Activated T-helper 2 cell treated with anti-CD3 and anti-CD28 coated beads, Interferon-gamma antibody, Interleukin-2, Interleukin-4, amounts not matched to agents 10 μg/mL and 5 μg/mL and 100 μg/mL, durations not matched to agents 14 hours and 24 hours and 36 hours (primary cell): ENCODE measurements at regions of chr15 and their contacts with region 1.

Region 1: DNA sequence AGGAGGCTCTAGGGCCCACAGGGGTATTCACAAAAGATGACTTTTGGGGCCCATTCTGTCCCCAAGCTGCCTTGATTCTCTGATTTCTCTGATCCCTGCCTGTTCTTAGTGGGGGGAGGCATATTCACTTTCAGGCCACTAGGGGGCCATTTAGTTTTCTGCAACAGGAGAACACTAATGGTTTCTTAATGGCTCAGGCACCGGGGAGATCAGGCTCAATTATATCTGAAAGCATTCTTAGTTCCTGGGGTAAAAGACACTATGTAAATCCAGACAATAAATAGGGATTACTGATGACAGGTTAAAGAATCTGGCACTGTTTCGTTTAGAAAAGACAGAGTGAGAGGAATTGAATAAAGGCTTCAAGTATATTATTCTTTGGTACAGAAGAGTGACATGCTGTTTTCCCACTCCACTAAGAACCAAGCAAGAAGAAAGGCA is 2.5 kb upstream of the INAFM2 start:
- DNase-seq: peak; percentile 50
- H3K4me3 Mint-ChIP-seq: no peak overlapping the region
- H3K27ac Mint-ChIP-seq: no peak overlapping the region
- H3K4me1 Mint-ChIP-seq: peaks cover 17% of the 10 kb centered on the region
- H3K27me3 Mint-ChIP-seq: peaks cover 35% of the 10 kb centered on the region

Region 2: DNA sequence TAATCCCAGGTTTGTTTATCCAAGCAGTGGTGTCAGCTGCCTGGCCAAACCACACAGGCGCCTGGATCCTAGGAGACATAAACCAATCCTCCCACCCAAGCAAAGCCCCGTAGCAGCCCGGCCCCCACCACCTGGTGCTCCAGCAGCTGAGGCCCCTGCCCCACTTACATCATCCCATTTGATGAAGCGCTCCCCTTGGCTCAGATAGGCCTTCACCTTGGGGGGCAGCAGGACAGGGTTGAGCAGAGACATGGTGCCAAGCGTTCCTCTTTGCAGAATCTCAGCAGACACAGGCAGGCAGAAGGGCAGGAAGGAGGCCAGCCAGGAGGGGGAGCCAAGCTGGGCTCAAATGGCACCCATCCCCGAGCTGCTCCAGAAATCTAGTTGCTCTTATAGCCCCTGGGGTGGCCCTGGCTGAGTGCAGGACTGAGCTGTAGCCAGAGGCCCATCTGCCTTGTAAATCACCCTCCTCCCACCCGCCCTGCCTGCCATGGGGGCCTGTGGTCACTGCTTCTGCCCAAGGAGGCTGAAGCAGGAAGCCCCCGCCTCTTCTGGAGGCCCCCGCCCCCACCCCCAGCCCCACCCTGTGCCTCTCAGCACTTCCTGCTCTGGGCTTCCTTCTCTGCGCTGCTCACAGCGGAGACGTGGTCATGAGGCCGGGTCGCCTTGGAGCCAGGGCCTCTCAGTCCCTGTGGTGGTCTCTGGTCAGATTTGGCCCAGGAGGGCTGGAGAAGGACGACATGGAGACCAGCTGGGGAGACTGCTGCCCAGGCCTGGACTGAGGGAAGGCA is 13.3 kb before region 1 on chr15 and contains the start of gene PLCB2:
- intact Hi-C with region 1: loop called (anchors 1 kb)
- DNase-seq: peak; percentile 68
- H3K4me3 Mint-ChIP-seq: peak within 1 kb of the TSS; percentile 90
- H3K27ac Mint-ChIP-seq: peak within 1 kb of the TSS; percentile 97
- H3K4me1 Mint-ChIP-seq: peaks cover 28% of the 10 kb centered on the region
- H3K27me3 Mint-ChIP-seq: peaks cover 10% of the 10 kb centered on the region
- total RNA-seq, gene PLCB2: 96.3 and 98.9 TPM in 2 replicates

Region 3: DNA sequence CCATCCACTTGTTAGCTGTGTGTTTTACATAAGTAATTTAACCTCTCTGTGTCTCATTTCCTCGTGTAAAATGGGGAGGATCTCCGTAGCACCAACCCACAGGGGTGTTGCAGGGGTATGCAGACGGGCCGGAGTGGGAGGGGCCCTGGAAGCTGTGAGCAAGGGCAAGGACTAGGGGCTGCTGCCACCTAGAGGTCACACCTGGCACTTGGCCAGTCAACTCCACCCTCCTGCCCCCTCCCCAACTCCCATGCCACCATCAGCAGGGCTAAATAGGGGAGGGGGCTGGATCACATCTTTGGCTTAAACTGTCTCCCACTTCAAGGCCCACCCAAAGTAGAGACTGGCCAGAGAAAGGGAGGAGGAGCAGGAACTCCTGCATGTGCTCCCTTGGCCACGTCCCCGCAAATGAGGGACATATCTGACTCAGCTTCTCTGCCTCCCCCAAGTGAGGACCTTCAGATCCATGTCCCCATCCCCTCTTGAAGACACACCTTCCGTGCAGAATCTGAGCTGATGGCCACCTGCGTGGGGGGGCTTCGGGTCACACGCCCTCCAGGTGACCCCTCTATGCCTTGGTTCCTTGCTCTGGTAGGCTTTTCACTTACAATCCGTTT is 17.2 kb after region 1 on chr15:
- intact Hi-C with region 1: loop called (anchors 1 kb)
- DNase-seq: peak; percentile 69
- H3K4me3 Mint-ChIP-seq: no peak overlapping the region
- H3K27ac Mint-ChIP-seq: no peak overlapping the region
- H3K4me1 Mint-ChIP-seq: peaks cover 10% of the 10 kb centered on the region
- H3K27me3 Mint-ChIP-seq: no peaks in the 10 kb centered on the region

Region 4: DNA sequence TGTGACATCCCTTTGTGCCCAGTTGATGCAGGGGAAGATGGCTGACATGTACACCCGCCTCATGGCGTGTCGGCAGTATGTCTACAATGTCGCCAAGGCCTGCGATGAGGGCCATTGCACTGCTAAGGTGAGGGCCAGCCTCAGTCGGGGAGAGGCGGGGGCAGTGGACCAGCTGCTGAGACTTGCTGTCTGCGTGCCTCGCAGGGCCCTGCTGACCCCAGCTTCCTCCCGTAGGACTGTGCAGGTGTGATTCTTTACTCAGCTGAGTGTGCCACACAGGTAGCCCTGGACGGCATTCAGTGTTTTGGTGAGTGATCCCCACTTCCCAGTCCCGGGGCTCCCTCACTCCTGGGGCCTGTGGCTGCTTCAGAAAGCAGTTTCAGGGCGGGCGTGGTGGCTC is 95.1 kb after region 1 on chr15:
- intact Hi-C with region 1: no loop called
- DNase-seq: no peak
- H3K4me3 Mint-ChIP-seq: no peak overlapping the region
- H3K27ac Mint-ChIP-seq: no peak overlapping the region
- H3K4me1 Mint-ChIP-seq: no peaks in the 10 kb centered on the region
- H3K27me3 Mint-ChIP-seq: no peaks in the 10 kb centered on the region